Dorsolateral prefrontal cortex (tissue), 120 donors: ENCODE measurements at regions of chr2 and their contacts with region 1.

Region 1: GRCh38 chr2:131154071-131154531 is 49.0 kb downstream of the PLEKHB2 start:
- DNase-seq: peak in 9 of 10 donors; percentile 40 to 80 (median 60)
- H3K4me3 ChIP-seq: no peak overlapping the region
- H3K27ac ChIP-seq: no peak overlapping the region
- H3K27me3 ChIP-seq: no peaks in the 10 kb centered on the region
- CTCF ChIP-seq: peak; percentile 39 to 88 (median 80)

Region 2: DNA sequence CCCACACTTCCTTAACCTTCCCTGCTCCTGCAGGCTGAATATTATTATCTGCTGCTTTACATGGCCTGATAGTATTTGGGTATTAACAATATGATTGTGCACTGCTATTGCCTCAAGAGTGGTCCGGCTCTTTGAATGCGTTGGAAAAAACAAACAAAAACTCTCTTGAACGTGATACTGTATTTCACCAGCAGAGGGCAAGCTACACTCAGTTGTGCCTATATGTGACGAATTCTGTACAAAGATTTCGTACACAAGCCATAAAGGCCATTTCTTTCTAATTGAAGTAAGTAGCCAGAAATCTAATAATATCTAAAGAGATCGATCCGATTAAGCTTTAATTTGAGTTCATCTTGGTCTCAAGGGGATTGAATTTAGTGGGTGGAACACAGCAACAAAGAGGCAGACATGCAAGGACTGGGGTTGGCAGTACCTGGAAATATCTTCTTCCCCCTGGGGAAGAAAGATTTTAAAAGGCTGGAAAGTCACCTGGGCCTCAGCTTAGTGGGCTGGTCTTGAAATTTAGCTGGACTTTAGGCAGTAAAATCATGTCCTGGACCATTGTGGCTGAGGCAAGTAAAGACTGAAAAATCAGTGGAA is 259.1 kb after region 1 on chr2:
- intact Hi-C with region 1: loop called in 1 of 2 experiments (anchors 5 kb)
- DNase-seq: no peak
- H3K4me3 ChIP-seq: peak overlapping the region in 1 of 59 donors; percentile 1
- H3K27ac ChIP-seq: no peak overlapping the region
- H3K27me3 ChIP-seq: peaks cover 0 to 31% (median 9%) of the 10 kb centered on the region in 45 donors
- CTCF ChIP-seq: peak; percentile 58 to 93 (median 82)

Region 3: GRCh38 chr2:131492418-131493198 is 338.5 kb after region 1 on chr2:
- intact Hi-C with region 1: loop called in 1 of 2 experiments (anchors 5 kb)
- DNase-seq: peak; percentile 82 to 91 (median 88)
- H3K4me3 ChIP-seq: peak overlapping the region; percentile 57 to 96 (median 86)
- H3K27ac ChIP-seq: peak overlapping the region; percentile 40 to 96 (median 89)
- H3K27me3 ChIP-seq: no peaks in the 10 kb centered on the region
- CTCF ChIP-seq: peak; percentile 58 to 93 (median 76)

Region 4: DNA sequence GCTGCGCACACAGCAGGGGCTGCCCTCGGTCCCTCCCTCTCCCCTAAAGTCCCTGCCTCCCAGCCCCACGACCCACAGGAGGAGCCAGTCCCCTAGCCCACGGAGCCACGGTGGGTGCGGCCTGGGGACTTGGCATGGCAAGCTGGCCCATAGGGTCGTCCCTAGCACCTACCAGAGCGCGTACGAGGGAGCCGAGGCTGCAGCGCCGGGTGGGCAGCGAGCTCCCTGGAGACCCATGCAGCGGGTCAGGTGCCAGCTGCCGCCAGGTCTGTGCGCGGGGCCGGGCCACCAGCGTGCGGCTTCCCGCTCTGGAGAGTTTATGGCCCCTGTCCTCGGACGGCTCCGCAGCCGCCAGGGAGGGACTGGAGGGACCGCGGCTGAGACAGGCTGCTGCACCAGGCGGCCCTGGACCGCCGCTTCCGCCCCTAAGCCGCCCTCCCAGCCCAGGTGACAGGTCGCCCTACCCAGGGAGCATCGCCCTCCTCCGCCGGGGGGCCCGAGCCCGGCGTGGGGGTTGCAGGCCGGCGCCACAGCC is 647.2 kb after region 1 on chr2:
- intact Hi-C with region 1: loop called in 1 of 2 experiments (anchors 5 kb)
- DNase-seq: no peak
- H3K4me3 ChIP-seq: peak overlapping the region in 49 of 59 donors; percentile 17 to 64 (median 41)
- H3K27ac ChIP-seq: no peak overlapping the region
- H3K27me3 ChIP-seq: peaks cover 0 to 4% (median 0%) of the 10 kb centered on the region in 45 donors
- CTCF ChIP-seq: no peak